WTC11 (cell line): ENCODE measurements at regions of chr3 and their contacts with region 1.

Region 1: DNA sequence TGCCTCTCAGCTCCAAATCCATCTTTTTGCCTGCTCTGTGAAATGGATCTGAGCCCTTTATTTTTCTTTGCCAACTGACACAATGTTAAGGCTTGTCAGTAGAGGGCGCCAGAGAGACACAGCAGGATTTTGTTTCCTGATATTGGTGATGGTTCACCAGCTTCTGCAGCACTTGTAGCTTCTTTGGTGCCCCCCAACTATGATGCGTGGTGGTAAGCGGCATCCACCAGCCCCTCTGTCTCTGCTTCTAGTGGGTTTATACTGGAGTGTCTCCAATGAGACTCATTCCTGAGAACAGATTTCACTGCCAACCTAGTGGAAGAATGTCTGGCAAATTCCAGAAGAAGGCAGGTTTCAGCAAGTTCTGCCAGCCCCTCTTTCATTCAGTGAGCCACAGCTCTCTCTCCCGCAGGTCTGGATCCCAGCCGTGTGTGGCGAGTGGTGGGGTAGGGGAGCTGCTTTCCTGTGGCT is 471.9 kb upstream of the FRG2C start:
- DNase-seq: peak; percentile 68
- ATAC-seq: peak; percentile 78
- H3K4me3 Mint-ChIP-seq: no peak overlapping the region
- H3K27ac Mint-ChIP-seq: no peak overlapping the region
- H3K4me1 Mint-ChIP-seq: peaks cover 30% of the 10 kb centered on the region
- H3K27me3 Mint-ChIP-seq: no peaks in the 10 kb centered on the region
- CTCF ChIP-seq: peak; percentile 89

Region 2: GRCh38 chr3:75180235-75180944 is 11.8 kb before region 1 on chr3:
- CTCF ChIA-PET with region 1: interaction called, 14 read pairs
- POLR2A ChIA-PET with region 1: no interaction called
- DNase-seq: no peak
- ATAC-seq: no peak
- H3K4me3 Mint-ChIP-seq: no peak overlapping the region
- H3K27ac Mint-ChIP-seq: no peak overlapping the region
- H3K4me1 Mint-ChIP-seq: peaks cover 12% of the 10 kb centered on the region
- H3K27me3 Mint-ChIP-seq: no peaks in the 10 kb centered on the region; the same call in 1 of the 2 replicates
- CTCF ChIP-seq: no peak

Region 3: DNA sequence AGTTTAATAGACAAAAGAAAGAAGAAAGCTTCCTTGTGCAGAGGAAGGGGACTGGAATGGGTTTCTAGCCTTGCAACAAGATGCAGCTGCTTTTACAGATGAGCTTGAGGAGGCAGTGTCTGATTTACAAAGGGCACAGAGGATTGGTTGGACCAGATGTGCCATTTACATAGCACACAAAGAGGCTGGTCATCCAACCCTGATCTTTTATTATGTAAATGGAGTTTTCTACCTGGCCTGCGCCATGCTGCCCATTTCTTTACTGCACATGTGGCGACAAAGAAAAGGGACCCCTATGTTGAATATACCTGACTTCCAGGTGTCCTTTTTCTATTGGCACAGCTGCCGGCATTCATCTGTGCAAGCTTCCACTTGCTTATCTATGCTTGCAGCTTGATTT is 62.5 kb after region 1 on chr3:
- CTCF ChIA-PET with region 1: interaction called, 10 read pairs
- POLR2A ChIA-PET with region 1: interaction called, 3 read pairs
- DNase-seq: peak; percentile 26
- ATAC-seq: peak; percentile 91
- H3K4me3 Mint-ChIP-seq: no peak overlapping the region
- H3K27ac Mint-ChIP-seq: peak overlapping the region; percentile 88
- H3K4me1 Mint-ChIP-seq: peaks cover 36% of the 10 kb centered on the region
- H3K27me3 Mint-ChIP-seq: no peaks in the 10 kb centered on the region
- CTCF ChIP-seq: no peak